Breast epithelium (tissue), 4 donors: ENCODE measurements at regions of chr11 and their contacts with region 1.

Region 1: GRCh38 chr11:7160814-7161489 is 72.2 kb downstream of the RBMXL2 start:
- DNase-seq: no peak
- H3K4me3 ChIP-seq: no peak overlapping the region
- H3K27ac ChIP-seq: no peak overlapping the region
- H3K4me1 ChIP-seq: no peaks in the 10 kb centered on the region
- H3K27me3 ChIP-seq: no peaks in the 10 kb centered on the region
- CTCF ChIP-seq: no peak
- POLR2A ChIP-seq: no peak

Region 2: DNA sequence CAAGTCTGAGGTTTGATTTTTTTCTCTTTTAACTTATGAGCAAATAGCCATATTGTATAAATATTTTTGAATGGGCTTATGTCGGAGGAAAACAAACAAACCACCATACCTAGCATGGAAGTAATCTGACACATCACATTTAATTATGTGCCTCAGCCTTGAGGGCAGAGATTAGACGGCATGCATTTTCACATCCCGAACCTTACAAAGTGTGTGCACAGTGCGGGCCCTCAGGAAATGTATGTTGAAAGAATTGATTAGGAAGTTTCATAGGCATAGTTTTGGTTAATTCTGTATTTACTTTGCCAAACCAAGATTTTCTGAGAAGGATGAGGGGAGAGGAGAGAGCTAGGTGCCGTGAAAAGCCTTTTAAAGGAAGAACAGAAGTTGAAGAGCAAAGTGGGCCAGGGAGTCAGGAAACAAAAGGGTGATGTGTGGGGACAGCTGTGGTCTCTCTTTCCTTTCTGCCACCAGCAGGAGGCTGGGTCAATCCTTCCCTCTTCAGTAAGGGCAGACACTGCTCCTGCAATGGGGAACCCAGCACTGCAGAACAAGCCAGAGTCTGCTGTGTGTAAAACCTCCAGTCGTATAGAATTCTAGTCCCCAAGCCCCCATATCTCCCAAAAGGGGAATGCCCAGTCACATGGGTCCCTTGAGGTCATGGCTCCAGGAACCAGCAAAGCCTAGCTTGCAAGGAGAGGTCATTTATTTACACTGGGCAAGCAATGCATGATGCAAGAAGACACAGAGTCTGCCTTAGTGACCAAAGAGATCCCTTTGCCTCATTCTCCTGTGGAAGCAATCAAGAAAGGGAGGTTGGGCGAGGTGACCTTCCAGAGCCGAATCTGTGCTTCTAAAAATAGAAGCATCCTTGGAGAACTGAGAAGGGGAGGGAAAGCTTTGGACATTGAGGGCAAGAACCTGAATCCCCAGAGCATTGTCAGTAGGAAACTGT is 253.3 kb after region 1 on chr11:
- intact Hi-C with region 1: loop called (anchors 5 kb)
- DNase-seq: no peak
- H3K4me3 ChIP-seq: no peak overlapping the region
- H3K27ac ChIP-seq: no peak overlapping the region
- H3K4me1 ChIP-seq: no peaks in the 10 kb centered on the region
- H3K27me3 ChIP-seq: no peaks in the 10 kb centered on the region
- CTCF ChIP-seq: no peak
- POLR2A ChIP-seq: no peak